T-cell (primary cell): ENCODE measurements at regions of chr18 and their contacts with region 1.

Region 1: DNA sequence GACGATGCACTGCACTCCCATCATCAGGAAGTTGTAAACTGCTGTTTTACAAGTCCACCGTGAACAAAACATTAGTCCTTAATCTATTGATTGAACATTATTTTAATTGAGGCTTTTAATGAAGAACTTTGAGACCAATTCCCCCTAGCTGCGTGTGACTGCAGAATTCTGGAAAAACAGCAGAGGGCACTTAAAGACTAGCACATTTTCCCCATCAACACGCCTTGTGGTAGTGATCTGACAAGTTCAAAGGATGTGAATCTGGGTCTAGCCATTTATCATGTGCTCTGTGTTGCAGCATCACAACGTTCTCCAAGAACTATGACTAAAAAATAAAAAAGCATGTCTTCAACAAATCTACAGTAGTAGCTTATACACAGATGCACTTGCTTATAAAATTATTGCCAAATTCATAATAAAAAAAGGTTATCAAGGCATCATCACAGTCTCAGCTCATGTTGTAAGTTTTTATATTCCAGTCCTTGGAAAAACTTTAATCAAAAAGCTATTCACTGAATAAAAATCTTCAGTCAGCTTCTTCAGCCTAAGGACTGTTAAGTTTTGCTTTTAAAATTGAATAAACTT is 35.8 kb downstream of the SKOR2 start:
- DNase-seq: peak in 1 of 35 experiments; percentile 34
- ATAC-seq: no peak
- H3K4me3 ChIP-seq: no peak overlapping the region
- H3K4me3 Mint-ChIP-seq: no peak overlapping the region
- H3K27ac ChIP-seq: no peak overlapping the region
- H3K27ac Mint-ChIP-seq: no peak overlapping the region
- H3K4me1 ChIP-seq: no peaks in the 10 kb centered on the region
- H3K4me1 Mint-ChIP-seq: peaks cover 0 to 2% (median 0%) of the 10 kb centered on the region in 3 donors
- H3K27me3 ChIP-seq: peaks cover 7% of the 10 kb centered on the region in 2 experiments
- H3K27me3 Mint-ChIP-seq: peaks cover 42 to 48% of the 10 kb centered on the region in 2 donors

Region 2: DNA sequence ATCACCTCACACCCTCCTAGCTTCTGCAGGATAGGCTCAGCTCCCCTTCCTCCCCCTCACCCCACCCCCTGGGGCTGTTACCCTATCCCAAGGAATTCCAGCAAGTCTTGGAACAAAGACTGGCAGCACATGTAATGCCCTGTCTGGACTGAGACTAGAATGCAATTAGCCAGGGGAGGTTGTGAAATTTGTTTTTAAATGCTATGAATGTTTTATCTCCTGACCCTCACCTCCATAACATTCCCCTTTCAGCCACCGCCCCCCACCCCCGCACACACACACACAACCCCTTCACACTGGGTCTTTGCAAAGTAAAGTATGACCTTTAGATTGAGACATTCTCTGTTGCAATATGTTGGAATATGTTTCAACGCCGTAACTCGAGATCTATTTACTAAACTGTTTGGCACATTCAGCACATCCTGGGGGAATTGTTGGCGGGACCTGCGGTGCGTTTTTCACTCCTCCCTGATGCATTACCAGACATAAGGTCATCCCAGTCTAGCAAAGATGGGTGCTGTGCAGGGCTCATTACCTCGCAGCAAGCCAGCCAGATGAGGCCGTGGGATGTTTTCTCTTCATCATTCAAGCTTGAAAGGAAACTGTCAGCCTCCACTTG is 1891.0 kb before region 1 on chr18:
- CTCF ChIA-PET with region 1: no interaction called
- POLR2A ChIA-PET with region 1: no interaction called
- DNase-seq: no peak
- ATAC-seq: no peak
- H3K4me3 ChIP-seq: no peak overlapping the region
- H3K4me3 Mint-ChIP-seq: no peak overlapping the region
- H3K27ac ChIP-seq: no peak overlapping the region
- H3K27ac Mint-ChIP-seq: no peak overlapping the region
- H3K4me1 ChIP-seq: no peaks in the 10 kb centered on the region
- H3K4me1 Mint-ChIP-seq: no peaks in the 10 kb centered on the region
- H3K27me3 ChIP-seq: no peaks in the 10 kb centered on the region
- H3K27me3 Mint-ChIP-seq: peaks cover 3 to 13% of the 10 kb centered on the region in 2 donors

Region 3: DNA sequence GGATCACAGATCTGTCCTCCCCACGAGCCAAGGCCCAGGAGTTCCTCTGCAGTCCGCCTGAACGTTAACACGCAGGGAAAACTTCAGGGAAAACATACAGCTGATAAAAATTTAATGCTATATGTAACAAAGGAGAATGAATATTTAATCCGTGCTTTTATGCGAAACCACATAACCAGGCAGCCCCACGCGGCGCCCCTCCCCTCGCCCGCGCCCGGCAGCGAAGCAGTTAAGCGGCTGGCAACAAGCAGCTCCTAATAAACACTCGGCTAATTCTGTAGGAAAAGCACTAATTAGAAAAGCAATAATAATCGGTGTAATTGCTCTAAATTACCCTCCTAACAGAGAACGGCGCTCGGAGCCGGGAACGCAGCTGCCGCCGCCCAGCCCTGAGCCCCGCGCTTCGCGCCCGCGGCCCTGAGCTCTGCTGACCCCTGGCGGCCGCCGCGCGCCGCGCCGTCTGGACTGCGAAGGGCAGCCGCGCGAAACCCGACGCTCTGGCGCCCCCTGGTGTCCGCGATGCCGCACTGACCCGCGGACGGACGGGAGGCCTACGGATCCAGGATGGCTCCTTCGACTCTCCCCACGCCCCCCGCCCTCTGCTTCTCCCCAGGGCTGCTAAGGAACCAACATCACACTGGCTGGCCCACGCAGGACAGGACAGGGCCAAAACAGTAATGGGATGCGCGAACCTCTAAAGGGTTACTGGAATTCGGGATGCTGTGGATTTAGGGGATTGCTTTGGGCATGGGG is 533.4 kb after region 1 on chr18:
- CTCF ChIA-PET with region 1: interaction called in 1 of 2 experiments, 11 read pairs
- POLR2A ChIA-PET with region 1: no interaction called
- DNase-seq: peak; percentile 47 to 92 (median 76)
- ATAC-seq: peak; percentile 97 to 99 (median 98)
- H3K4me3 ChIP-seq: peak overlapping the region in 1 of 2 donors; percentile 56
- H3K4me3 Mint-ChIP-seq: peak overlapping the region in 1 of 3 donors; percentile 51
- H3K27ac ChIP-seq: no peak overlapping the region
- H3K27ac Mint-ChIP-seq: no peak overlapping the region
- H3K4me1 ChIP-seq: peaks cover 0 to 10% of the 10 kb centered on the region in 2 experiments
- H3K4me1 Mint-ChIP-seq: peaks cover 4 to 7% (median 7%) of the 10 kb centered on the region in 3 donors
- H3K27me3 ChIP-seq: peaks cover 0 to 33% of the 10 kb centered on the region in 2 experiments
- H3K27me3 Mint-ChIP-seq: peaks cover 0 to 12% of the 10 kb centered on the region in 2 donors